ENCODE measurements at regions of chr9 and their contacts with region 1.

Region 1: GRCh38 chr9:122350638-122351355 is 20.0 kb upstream of the PTGS1 start:
- DNase-seq: peak; percentile 78 to 91
- ATAC-seq: peak; percentile 87 to 94 (median 91)
- H3K4me3 ChIP-seq: no peak overlapping the region
- H3K27ac ChIP-seq: no peak overlapping the region
- H3K4me1 ChIP-seq: no peaks in the 10 kb centered on the region
- H3K27me3 ChIP-seq: no peaks in the 10 kb centered on the region
- CTCF ChIP-seq: peak; percentile 94

Region 2: DNA sequence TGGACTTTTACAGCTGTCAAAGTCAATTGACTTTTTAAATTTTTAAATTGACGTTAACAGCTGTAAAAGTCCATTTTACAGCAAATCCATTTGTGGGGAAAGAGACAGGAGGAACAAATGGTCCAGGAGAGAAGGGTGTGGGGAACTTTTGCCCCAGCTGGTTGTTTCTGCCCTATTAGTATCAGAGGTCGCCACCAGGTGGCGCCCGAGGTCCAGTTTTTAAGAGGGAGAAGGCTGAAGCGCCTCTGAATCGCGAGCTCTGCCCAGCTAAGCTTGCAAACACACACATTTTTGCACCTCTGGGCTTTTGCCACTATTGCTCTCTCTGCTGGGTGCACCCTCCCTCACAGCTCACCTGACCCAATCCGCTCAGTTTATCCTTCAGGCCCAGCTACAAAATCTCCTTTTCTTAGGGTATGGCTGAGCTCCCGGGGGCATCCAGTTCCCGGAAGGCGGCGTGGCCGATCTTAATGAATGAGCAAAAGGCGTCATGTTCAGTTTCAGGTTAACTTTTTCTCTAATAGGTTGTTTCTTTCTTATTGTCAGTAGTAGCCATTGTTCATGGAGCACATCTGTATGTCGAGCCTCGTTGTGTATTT is 251.4 kb before region 1 on chr9:
- intact Hi-C with region 1: loop called in 1 of 2 experiments (anchors 2 kb)
- DNase-seq: peak; percentile 85 to 92
- ATAC-seq: peak; percentile 83 to 94 (median 86)
- H3K4me3 ChIP-seq: peak overlapping the region; percentile 39
- H3K27ac ChIP-seq: no peak overlapping the region
- H3K4me1 ChIP-seq: peaks cover 9% of the 10 kb centered on the region
- H3K27me3 ChIP-seq: no peaks in the 10 kb centered on the region
- CTCF ChIP-seq: peak; percentile 84

Region 3: GRCh38 chr9:122213589-122214413 is 137.0 kb before region 1 on chr9:
- intact Hi-C with region 1: loop called in 1 of 2 experiments (anchors 10 kb)
- DNase-seq: peak in 1 of 2 donors; percentile 44
- ATAC-seq: peak; percentile 60 to 72 (median 64)
- H3K4me3 ChIP-seq: peak overlapping the region; percentile 61
- H3K27ac ChIP-seq: no peak overlapping the region
- H3K4me1 ChIP-seq: peaks cover 6% of the 10 kb centered on the region
- H3K27me3 ChIP-seq: peaks cover 0 to 73% (median 25%) of the 10 kb centered on the region in 3 donors
- CTCF ChIP-seq: no peak

Region 4: GRCh38 chr9:122228568-122229484 is 122.0 kb before region 1 on chr9 and contains the start of gene LHX6:
- intact Hi-C with region 1: loop called in 1 of 2 experiments (anchors 5 kb)
- DNase-seq: no peak
- ATAC-seq: peak in 3 of 4 donors; percentile 42 to 65 (median 60)
- H3K4me3 ChIP-seq: peak within 1 kb of the TSS; percentile 64
- H3K27ac ChIP-seq: no peak within 1 kb of the TSS
- H3K4me1 ChIP-seq: no peaks in the 10 kb centered on the region
- H3K27me3 ChIP-seq: peaks cover 0 to 71% (median 39%) of the 10 kb centered on the region in 3 donors
- CTCF ChIP-seq: no peak
- total RNA-seq, gene LHX6: 1.3 to 6.0 (median 3.0) TPM

Measured in psoas muscle (tissue), 8 donors.